Naive thymus-derived CD4-positive, alpha-beta T cell (primary cell): ENCODE measurements at regions of chr1 and their contacts with region 1.

Region 1: DNA sequence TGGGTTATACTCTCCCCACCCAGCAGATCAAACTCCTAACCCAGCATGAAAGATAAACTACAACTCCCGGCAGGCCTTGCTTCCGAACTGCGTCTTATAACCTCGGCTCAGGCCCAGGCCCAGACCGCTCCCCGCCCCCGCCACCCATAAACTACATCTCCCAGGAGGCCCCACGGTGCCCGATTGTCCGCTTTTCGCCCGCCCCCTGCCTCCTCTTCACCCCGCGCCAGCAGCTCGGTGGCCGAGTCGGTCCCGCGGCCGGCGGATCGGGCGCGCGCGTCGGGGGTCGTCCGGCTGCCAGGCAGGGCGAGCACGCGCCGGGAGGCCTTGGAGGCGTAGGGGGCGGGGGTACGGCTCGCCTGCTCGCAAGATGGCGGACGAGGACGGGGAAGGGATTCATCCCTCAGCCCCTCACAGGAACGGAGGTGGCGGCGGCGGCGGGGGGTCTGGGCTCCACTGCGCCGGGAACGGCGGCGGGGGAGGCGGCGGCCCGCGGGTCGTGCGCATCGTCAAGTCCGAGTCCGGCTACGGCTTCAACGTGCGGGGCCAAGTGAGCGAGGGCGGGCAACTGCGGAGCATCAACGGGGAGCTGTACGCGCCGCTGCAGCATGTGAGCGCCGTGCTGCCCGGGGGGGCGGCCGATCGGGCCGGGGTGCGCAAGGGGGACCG is at the start of gene SNX27:
- DNase-seq: peak; percentile 76 to 94 (median 87)
- ATAC-seq: peak; percentile 95
- H3K4me3 ChIP-seq: peak within 1 kb of the TSS; percentile 80
- H3K4me3 Mint-ChIP-seq: peak within 1 kb of the TSS; percentile 89 to 100 (median 97)
- H3K27ac ChIP-seq: peak within 1 kb of the TSS; percentile 98
- H3K27ac Mint-ChIP-seq: peak within 1 kb of the TSS; percentile 88 to 98 (median 92)
- H3K4me1 ChIP-seq: peaks cover 11 to 18% of the 10 kb centered on the region in 2 donors
- H3K4me1 Mint-ChIP-seq: peaks cover 40 to 50% (median 45%) of the 10 kb centered on the region in 7 donors
- H3K27me3 ChIP-seq: no peaks in the 10 kb centered on the region
- H3K27me3 Mint-ChIP-seq: peaks cover 0 to 11% (median 6%) of the 10 kb centered on the region in 5 donors
- total RNA-seq, gene SNX27: 25.5 to 42.1 (median 41.0) TPM

Region 2: DNA sequence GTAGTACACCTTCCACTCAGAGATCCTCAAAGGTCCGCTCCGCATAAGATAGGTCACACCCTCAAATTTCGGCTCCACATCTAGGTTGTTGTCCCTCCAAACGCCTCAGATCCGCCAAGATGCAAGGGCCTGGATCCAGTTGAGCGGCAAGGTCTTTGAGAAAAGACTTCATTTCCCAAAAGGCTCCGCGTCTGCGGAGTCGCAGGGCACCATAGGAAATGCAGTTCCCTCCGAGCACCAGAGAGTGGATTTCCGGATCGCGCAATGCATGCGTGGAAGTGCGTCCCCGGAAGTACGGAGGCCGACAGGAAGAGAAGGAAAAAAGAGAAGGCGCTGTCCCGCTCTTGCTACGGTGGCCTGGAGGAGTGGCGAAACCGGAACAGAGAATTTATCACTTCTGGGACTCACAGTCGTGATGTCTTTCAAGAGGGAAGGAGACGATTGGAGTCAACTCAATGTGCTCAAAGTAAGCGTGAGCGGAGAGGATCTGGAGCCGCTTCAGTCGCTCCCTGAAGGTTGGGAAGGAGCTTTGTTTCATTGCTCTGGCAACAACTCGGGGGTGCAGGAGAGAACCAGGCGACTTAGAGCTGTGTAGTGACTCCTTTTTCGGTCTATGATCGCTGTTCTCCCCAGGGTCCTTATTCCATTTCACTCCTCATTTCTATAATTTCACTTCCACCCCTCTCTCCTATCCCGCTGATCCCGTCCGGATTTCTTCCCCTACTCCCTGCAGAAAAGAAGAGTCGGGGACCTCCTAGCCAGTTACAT is 446.0 kb before region 1 on chr1 and contains the starts of genes LYSMD1 and SCNM1:
- CTCF ChIA-PET with region 1: no interaction called
- POLR2A ChIA-PET with region 1: interaction called, 3 read pairs
- intact Hi-C with region 1: loop called in 1 of 2 experiments (anchors 5 kb)
- DNase-seq: peak; percentile 78 to 98 (median 97)
- ATAC-seq: peak; percentile 98
- H3K4me3 ChIP-seq: peak within 1 kb of the TSS; percentile 97
- H3K4me3 Mint-ChIP-seq: peak within 1 kb of the TSS; percentile 87 to 99 (median 95)
- H3K27ac ChIP-seq: peak within 1 kb of the TSS; percentile 71
- H3K27ac Mint-ChIP-seq: peak within 1 kb of the TSS; percentile 90 to 99 (median 97)
- H3K4me1 ChIP-seq: peaks cover 18 to 19% of the 10 kb centered on the region in 2 donors
- H3K4me1 Mint-ChIP-seq: peaks cover 30 to 70% (median 52%) of the 10 kb centered on the region in 7 donors
- H3K27me3 ChIP-seq: no peaks in the 10 kb centered on the region
- H3K27me3 Mint-ChIP-seq: peaks cover 0 to 3% (median 0%) of the 10 kb centered on the region in 5 donors
- total RNA-seq, gene LYSMD1: 1.4 to 3.3 (median 2.3) TPM
- total RNA-seq, gene SCNM1: 37.1 to 73.1 (median 57.1) TPM

Region 3: GRCh38 chr1:151399890-151400495 is 212.0 kb before region 1 on chr1:
- CTCF ChIA-PET with region 1: no interaction called
- POLR2A ChIA-PET with region 1: no interaction called
- intact Hi-C with region 1: loop called in 1 of 2 experiments (anchors 1 kb)
- DNase-seq: peak in 3 of 9 donors; percentile 2 to 10 (median 10)
- ATAC-seq: peak; percentile 15
- H3K4me3 ChIP-seq: peak overlapping the region; percentile 95
- H3K4me3 Mint-ChIP-seq: peak overlapping the region; percentile 84 to 99 (median 94)
- H3K27ac ChIP-seq: peak overlapping the region; percentile 98
- H3K27ac Mint-ChIP-seq: peak overlapping the region; percentile 94 to 99 (median 98)
- H3K4me1 ChIP-seq: peaks cover 13 to 14% of the 10 kb centered on the region in 2 donors
- H3K4me1 Mint-ChIP-seq: peaks cover 11 to 34% (median 28%) of the 10 kb centered on the region in 7 donors
- H3K27me3 ChIP-seq: no peaks in the 10 kb centered on the region
- H3K27me3 Mint-ChIP-seq: peaks cover 0 to 12% (median 0%) of the 10 kb centered on the region in 5 donors

Region 4: GRCh38 chr1:151594143-151594625 is 17.8 kb before region 1 on chr1:
- CTCF ChIA-PET with region 1: no interaction called
- POLR2A ChIA-PET with region 1: interaction called, 4 read pairs
- intact Hi-C with region 1: loop called (anchors 1 to 2 kb)
- DNase-seq: peak; percentile 67 to 89 (median 84)
- ATAC-seq: peak; percentile 99
- H3K4me3 ChIP-seq: no peak overlapping the region
- H3K4me3 Mint-ChIP-seq: peak overlapping the region; percentile 18 to 83 (median 77)
- H3K27ac ChIP-seq: no peak overlapping the region
- H3K27ac Mint-ChIP-seq: peak overlapping the region in 8 of 9 donors; percentile 22 to 84 (median 61)
- H3K4me1 ChIP-seq: peaks cover 0 to 6% of the 10 kb centered on the region in 2 donors
- H3K4me1 Mint-ChIP-seq: peaks cover 2 to 17% (median 11%) of the 10 kb centered on the region in 7 donors
- H3K27me3 ChIP-seq: no peaks in the 10 kb centered on the region
- H3K27me3 Mint-ChIP-seq: peaks cover 0 to 27% (median 8%) of the 10 kb centered on the region in 5 donors

Region 5: DNA sequence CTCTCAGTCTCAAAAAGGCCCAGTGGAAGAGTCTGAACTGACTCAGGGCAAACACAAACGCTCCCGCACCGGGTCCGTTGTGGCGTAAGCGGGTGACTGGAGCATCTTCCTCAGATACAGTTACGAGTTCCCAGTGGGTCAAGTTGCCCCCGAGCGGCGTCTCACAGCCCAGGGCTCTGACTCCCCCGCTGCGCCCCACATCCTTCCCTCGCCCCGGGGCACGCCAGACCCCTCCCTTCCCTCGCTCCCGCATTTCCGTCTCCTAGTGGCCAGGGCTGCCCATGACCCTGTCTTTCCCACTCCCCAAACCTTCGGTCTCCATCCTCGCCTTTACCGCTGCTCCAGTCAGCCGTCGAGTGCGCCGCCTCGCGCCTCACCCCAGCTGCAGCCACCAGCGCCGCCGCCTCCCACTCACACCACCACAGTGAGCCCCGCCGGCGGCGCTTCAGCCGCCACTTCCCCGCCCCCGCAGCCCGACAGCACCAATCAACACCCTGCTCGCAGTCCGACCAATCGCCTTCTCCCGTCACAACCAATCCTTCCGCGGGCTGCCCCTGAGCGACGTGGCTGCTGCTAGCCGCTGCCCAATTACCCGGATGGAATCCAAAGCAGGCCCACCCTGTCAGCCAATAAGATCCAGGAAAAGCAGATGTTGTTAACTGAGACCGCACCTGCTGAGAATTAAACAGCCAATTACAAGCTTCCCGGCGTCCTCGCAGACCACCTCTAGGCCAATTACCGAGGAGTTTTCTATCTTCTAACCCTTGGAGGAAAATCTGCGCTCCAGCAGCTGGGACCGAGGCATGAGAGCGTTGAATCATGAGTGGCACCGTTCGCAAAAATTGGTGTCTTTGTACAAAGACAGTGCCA is 178.3 kb after region 1 on chr1 and contains the start of gene TDRKH:
- CTCF ChIA-PET with region 1: no interaction called
- POLR2A ChIA-PET with region 1: no interaction called
- intact Hi-C with region 1: loop called (anchors 1 kb)
- DNase-seq: peak; percentile 93 to 99 (median 99)
- ATAC-seq: peak; percentile 97
- H3K4me3 ChIP-seq: peak within 1 kb of the TSS; percentile 88
- H3K4me3 Mint-ChIP-seq: peak within 1 kb of the TSS; percentile 91 to 99 (median 97)
- H3K27ac ChIP-seq: peak within 1 kb of the TSS; percentile 60
- H3K27ac Mint-ChIP-seq: peak within 1 kb of the TSS; percentile 75 to 93 (median 89)
- H3K4me1 ChIP-seq: peaks cover 0 to 14% of the 10 kb centered on the region in 2 donors
- H3K4me1 Mint-ChIP-seq: peaks cover 6 to 38% (median 30%) of the 10 kb centered on the region in 7 donors
- H3K27me3 ChIP-seq: no peaks in the 10 kb centered on the region
- H3K27me3 Mint-ChIP-seq: peaks cover 0 to 2% (median 0%) of the 10 kb centered on the region in 5 donors
- total RNA-seq, gene TDRKH: 7.7 to 23.1 (median 17.0) TPM

Region 6: DNA sequence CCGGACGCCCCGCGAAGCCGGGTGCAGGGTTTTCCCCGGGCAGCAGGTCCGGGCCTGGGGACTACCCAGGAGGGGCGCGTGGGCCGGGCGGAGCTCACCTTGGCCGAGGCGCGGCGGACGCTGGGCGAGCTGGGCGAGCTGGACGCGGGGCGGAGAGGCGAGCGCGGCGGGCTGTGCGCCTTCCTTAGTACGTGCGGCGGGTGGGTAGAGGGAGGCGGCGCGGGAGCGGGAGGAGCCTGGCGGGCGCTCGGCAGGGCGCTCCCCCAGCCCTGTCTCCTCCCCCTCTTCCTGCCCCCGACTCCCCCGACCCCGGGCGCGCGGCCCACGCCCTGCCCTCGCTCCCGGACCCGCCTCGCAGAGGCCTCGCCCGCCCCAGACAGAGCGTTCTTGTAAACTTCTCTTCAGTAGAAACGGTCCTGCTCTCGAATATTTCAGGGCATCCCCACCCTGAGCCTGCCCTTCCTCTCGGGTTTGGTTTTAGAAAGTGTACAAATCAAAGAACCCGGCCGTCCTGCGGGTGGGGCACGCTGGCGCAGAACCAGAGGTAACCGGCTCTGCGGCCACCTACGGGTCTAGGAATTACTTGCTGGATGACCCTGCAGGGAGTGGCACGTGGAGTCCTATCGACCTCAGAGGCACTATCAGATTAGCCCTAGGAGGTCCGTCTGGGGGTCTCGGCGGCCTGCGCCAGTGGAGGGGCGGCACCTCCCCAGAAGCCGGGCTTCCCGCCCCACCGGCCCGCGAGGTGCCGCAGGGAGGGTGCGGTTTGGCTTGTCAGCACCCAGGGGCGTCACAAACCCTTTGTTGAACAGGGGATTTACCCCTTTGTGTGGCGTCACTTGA is 381.9 kb after region 1 on chr1 and contains the start of gene S100A10:
- CTCF ChIA-PET with region 1: no interaction called
- POLR2A ChIA-PET with region 1: no interaction called
- intact Hi-C with region 1: loop called in 1 of 2 experiments (anchors 5 kb)
- DNase-seq: peak; percentile 64 to 82 (median 81)
- ATAC-seq: peak; percentile 85
- H3K4me3 ChIP-seq: peak within 1 kb of the TSS; percentile 88
- H3K4me3 Mint-ChIP-seq: peak within 1 kb of the TSS; percentile 90 to 100 (median 96)
- H3K27ac ChIP-seq: peak within 1 kb of the TSS; percentile 83
- H3K27ac Mint-ChIP-seq: peak within 1 kb of the TSS; percentile 89 to 98 (median 95)
- H3K4me1 ChIP-seq: peaks cover 22 to 37% of the 10 kb centered on the region in 2 donors
- H3K4me1 Mint-ChIP-seq: peaks cover 33 to 56% (median 45%) of the 10 kb centered on the region in 7 donors
- H3K27me3 ChIP-seq: no peaks in the 10 kb centered on the region
- H3K27me3 Mint-ChIP-seq: peaks cover 0 to 10% (median 0%) of the 10 kb centered on the region in 5 donors
- total RNA-seq, gene S100A10: 131 to 361 (median 143) TPM